ENCODE measurements at regions of chr11 and their contacts with region 1.

Region 1: DNA sequence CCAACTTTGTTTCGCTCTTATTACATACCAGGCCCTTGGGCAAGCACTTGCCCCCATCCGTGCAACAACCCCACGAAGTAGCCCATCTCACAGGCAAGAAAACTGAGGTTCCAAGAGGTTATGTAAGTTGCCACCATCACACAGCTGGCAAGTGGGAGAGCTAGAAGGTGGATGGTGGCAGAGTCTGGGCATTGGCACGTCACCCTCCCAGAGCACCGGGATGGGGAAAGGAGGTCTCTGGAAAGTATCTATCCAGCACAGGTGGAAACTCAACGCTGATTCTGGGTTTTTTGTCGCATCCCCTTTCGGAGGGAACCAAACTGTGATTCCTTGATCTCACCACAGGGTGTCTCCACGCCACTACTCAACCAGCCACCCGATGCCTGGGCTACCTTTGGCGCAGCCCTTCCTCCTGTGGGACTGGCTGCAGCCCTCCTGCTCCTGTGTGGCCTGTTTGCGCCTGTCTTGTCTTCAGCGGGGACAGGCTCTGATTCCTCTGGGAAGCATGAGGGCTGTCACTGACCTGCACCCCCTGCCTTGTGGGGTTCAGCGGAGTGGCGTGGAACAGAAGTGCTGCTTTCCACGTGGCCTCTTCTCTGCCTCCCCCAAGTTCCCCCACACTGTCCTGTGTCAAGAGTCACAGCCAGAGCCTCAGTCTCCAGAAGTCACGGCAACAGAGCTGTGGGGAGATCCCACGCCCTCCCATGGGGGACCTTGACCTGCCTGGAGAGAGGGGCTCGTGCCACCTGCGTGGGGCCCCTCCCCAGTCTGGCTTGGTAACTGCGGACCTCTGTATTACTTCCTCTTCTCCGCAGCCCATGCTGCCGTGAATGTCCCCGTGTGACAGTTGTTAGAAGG is 34.4 kb upstream of the TRIM29 start:
- DNase-seq: peak; percentile 92
- H3K4me3 ChIP-seq: no peak overlapping the region
- H3K27ac ChIP-seq: no peak overlapping the region
- H3K4me1 ChIP-seq: peaks cover 11 to 35% (median 33%) of the 10 kb centered on the region in 4 donors
- H3K27me3 ChIP-seq: peaks cover 0 to 49% (median 11%) of the 10 kb centered on the region in 4 donors
- CTCF ChIP-seq: peak; percentile 70 to 79 (median 77)
- EP300 ChIP-seq: no peak
- POLR2A ChIP-seq: no peak

Region 2: GRCh38 chr11:119942583-119943297 is 229.5 kb before region 1 on chr11:
- intact Hi-C with region 1: no loop called
- DNase-seq: no peak
- H3K4me3 ChIP-seq: no peak overlapping the region
- H3K27ac ChIP-seq: no peak overlapping the region
- H3K4me1 ChIP-seq: peaks cover 0 to 4% (median 0%) of the 10 kb centered on the region in 4 donors
- H3K27me3 ChIP-seq: peaks cover 0 to 74% (median 0%) of the 10 kb centered on the region in 4 donors
- CTCF ChIP-seq: no peak
- EP300 ChIP-seq: no peak
- POLR2A ChIP-seq: no peak

Region 3: DNA sequence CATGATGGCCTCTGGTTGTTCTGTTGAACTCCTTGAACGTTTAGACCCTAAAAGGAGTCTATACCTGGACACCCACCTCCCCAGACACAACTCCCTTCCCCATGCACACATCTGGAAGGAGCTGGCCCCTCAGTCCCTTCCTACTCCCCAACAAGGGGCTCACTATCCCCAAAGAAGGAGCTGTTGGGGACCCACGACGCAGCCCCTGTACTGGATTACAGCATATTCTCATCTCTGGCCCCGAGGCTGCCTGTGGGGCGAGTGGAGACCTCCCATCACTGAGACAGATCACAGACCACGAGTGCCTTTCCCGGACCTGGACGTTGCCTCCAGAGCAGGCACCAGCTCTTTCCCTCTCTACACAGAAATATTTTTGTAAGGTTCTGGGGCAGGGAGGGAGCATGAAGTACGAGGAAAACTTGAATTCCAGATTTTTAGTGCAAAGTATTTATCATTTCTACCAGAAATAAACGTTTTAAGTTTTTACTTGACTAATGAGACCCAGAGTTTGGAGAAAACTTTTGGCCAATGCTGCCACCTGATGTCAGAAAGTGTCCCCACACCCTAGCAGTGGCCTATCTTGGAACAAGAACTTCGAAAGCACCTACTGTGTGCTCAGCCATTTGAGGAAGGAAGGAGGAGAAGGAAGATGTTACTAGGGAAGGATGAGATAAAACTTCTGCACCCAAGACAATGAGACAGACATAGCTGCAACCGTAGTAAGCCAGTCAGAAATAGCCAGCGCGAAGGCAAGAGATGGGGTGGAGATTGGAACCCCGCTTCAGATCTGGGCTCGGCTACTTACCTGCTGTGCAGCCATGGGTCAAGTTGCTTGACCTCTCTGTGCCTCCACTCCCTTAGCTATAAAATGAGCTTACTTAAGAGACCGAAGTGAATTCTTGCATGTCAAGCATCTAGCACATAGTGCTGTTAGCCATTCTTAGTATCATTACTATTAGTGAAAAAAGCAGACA is 57.5 kb after region 1 on chr11:
- intact Hi-C with region 1: loop called (anchors 2 kb)
- DNase-seq: no peak
- H3K4me3 ChIP-seq: no peak overlapping the region
- H3K27ac ChIP-seq: peak overlapping the region in 1 of 4 donors; percentile 24
- H3K4me1 ChIP-seq: peaks cover 6 to 28% (median 18%) of the 10 kb centered on the region in 4 donors
- H3K27me3 ChIP-seq: peaks cover 0 to 32% (median 0%) of the 10 kb centered on the region in 4 donors
- CTCF ChIP-seq: peak; percentile 63 to 69 (median 66)
- EP300 ChIP-seq: no peak
- POLR2A ChIP-seq: no peak

Region 4: GRCh38 chr11:120303004-120303637 is 130.8 kb after region 1 on chr11:
- intact Hi-C with region 1: loop called (anchors 5 kb)
- DNase-seq: no peak
- H3K4me3 ChIP-seq: no peak overlapping the region
- H3K27ac ChIP-seq: no peak overlapping the region
- H3K4me1 ChIP-seq: peaks cover 0 to 11% (median 6%) of the 10 kb centered on the region in 4 donors
- H3K27me3 ChIP-seq: peaks cover 0 to 24% (median 0%) of the 10 kb centered on the region in 4 donors
- CTCF ChIP-seq: peak; percentile 78 to 89 (median 80)
- EP300 ChIP-seq: no peak
- POLR2A ChIP-seq: no peak

Measured in esophagus muscularis mucosa (tissue), 4 donors.